Endothelial cell of umbilical vein (primary cell): ENCODE measurements at regions of chr19 and their contacts with region 1.

Region 1: DNA sequence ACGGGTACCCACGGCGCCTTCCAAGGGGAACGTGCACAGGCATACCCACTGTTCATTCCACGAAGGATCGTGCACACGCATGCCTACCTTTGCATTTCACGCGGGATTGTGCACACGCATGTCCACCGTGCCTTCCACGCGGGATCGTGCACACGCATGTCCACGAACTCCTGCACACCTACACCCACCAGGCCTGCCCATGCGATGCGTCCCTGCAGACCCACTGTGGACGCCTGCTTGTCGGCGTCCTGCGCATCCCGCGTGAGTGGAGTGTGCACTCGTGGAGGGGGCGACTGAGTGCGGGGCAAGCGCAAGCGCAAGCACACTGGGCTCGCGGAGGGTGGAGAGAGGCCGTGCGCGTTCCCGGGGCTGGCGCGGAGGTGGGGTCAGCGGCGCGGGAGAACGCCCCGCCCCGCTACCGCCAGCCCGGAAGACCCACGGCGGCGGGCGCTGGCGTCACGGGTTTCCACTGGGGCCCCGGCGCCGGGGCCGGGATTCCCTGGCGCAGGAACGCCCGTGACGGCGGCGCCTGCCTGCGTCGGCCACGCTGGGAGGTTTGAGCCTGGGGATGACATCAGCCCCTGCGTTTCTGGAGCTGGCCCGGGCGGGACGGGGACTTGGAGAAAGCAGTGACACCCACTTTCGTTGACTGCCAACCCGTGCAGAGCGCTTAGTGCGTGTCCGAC is 18.7 kb downstream of the GADD45B start:
- DNase-seq: peak; percentile 57
- H3K4me3 ChIP-seq: peak overlapping the region; percentile 41 to 60 (median 50)
- H3K27ac ChIP-seq: peak overlapping the region; percentile 88
- H3K4me1 ChIP-seq: peaks cover 22% of the 10 kb centered on the region
- H3K27me3 ChIP-seq: no peaks in the 10 kb centered on the region
- CTCF ChIP-seq: no peak
- POLR2A ChIP-seq: no peak

Region 2: DNA sequence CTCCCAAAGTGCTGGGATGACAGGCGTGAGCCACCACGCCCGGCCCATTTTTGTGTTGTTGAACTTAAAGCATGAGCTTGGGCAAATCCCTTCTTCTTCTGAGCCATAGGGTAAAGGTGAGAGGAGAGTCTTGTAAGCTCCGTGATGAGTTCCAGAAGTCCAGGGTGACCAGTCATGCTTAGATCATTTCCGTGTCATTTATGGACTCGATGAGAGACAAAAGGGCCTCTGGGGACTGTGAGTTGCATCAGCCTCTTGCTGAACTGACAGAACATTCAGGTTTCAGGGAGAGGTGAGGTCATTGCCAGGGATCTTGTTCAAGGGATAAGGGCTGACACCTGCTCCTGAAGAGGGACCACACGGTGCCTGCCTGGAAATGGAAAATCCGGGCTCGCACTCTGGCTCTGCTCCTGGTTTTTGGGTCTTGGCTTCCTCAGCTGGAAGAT is 34.9 kb after region 1 on chr19:
- CTCF ChIA-PET with region 1: no interaction called
- POLR2A ChIA-PET with region 1: interaction called, 3 read pairs
- dilution Hi-C with region 1: no loop called
- intact Hi-C with region 1: loop called (anchors 1 kb)
- DNase-seq: peak; percentile 75
- H3K4me3 ChIP-seq: no peak overlapping the region
- H3K27ac ChIP-seq: peak overlapping the region; percentile 75
- H3K4me1 ChIP-seq: peaks cover 36% of the 10 kb centered on the region
- H3K27me3 ChIP-seq: no peaks in the 10 kb centered on the region
- CTCF ChIP-seq: no peak
- POLR2A ChIP-seq: no peak